ENCODE measurements at regions of chr17 and their contacts with region 1.

Region 1: GRCh38 chr17:17783116-17783824 is 53.5 kb downstream of the SREBF1 start:
- DNase-seq: peak in 1 of 2 donors; percentile 79
- H3K4me3 ChIP-seq: peak overlapping the region; percentile 50 to 58
- H3K27ac ChIP-seq: peak overlapping the region; percentile 70 to 82
- H3K4me1 ChIP-seq: peaks cover 13 to 62% (median 47%) of the 10 kb centered on the region in 4 donors
- H3K27me3 ChIP-seq: no peaks in the 10 kb centered on the region
- CTCF ChIP-seq: no peak

Region 2: DNA sequence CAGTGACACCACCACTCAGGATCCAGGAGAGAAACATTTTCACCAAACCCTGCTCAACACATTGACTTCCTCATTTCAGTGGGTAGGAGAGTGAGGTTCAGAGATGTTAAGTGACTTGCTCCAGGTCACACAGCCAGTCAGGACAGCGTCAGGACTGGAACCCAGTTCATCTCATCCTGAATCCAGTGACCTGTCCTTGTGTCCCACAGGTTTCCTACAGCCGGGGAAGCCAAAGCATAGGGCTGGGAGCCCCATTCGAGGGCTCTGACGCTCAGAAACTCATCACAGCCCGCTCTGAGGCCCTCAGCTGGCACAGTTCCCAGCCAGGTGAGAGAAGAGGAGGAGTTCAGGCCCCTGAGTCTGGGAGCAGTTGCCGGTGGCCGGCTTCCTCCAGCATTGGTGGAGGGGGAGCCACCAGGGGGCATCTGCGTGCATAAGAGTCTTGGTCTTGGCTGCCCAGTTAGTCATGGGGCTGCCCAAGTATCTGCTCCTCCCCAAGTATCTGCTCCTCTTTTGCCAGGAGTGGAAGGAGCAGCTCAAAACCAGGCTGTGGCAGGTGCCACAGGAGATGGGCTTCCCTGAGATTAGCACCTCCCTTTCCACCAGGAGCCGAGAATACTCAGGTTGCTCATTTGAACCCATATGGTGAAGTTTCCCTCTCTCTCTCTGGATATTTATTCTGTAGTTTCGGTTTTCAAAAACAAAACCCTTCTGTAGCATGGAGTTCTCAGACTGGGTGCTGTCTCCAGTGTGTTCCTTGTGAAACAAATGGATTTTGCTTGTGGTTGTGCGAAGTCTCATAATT is 867.3 kb before region 1 on chr17:
- intact Hi-C with region 1: no loop called
- DNase-seq: peak; percentile 57 to 67
- H3K4me3 ChIP-seq: no peak overlapping the region
- H3K27ac ChIP-seq: no peak overlapping the region
- H3K4me1 ChIP-seq: no peaks in the 10 kb centered on the region
- H3K27me3 ChIP-seq: peaks cover 0 to 16% of the 10 kb centered on the region in 2 donors
- CTCF ChIP-seq: no peak

Region 3: DNA sequence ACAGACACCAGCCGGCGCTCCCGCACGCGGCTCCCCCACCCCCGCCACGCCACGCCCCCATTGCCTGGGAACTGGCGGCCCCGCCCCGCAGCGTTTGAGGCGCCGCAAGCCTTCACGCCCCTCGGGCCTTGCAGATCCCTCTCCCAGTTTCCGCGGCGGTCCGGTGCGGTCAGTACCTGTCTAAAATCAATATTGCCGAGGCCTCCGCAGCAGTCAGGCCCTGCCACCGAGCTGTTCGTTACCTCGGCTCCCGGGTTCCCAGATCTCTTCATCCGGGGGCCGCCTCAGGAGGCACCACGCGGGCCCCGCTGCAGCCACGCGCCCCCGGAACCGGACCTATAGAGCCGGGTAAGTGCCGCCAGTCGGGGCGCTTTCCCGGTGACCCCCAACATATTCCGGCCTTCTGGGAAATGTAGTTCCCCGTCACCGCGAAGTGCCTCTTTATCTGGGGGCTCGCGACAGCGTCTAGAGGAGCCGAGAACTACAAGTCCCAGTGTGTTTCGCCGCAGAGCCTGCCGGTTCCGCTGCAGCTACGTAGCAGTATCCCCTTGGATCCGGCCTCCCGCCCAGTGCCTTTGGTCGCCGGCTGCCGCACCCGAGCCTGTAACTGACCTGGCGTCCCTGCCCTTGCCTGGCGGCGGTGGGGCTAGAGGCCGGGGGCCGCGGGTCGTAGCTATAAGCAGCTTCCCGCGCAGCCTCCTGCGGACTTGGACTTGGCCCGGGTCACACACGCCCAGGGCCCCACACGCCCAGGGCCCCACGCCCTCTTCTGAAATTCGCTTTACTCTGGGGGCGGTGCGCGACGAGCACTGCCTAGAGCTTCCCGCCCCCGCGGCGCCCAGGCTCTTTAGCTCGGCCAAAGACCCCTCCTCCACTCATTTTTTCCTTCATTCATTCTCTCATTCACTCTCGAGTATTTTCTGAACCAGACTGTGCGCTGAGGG is 191.6 kb before region 1 on chr17 and contains the start of gene PEMT:
- intact Hi-C with region 1: no loop called
- DNase-seq: peak; percentile 98
- H3K4me3 ChIP-seq: peak within 1 kb of the TSS; percentile 62 to 69
- H3K27ac ChIP-seq: peak within 1 kb of the TSS; percentile 75 to 81
- H3K4me1 ChIP-seq: peaks cover 0 to 27% (median 20%) of the 10 kb centered on the region in 4 donors
- H3K27me3 ChIP-seq: no peaks in the 10 kb centered on the region
- CTCF ChIP-seq: no peak

Region 4: GRCh38 chr17:17752089-17752820 is 31.0 kb before region 1 on chr17:
- intact Hi-C with region 1: loop called (anchors 2 kb)
- DNase-seq: peak; percentile 96 to 98
- H3K4me3 ChIP-seq: peak overlapping the region; percentile 51 to 52
- H3K27ac ChIP-seq: peak overlapping the region; percentile 69 to 77
- H3K4me1 ChIP-seq: peaks cover 0 to 39% (median 36%) of the 10 kb centered on the region in 4 donors
- H3K27me3 ChIP-seq: no peaks in the 10 kb centered on the region
- CTCF ChIP-seq: peak; percentile 34 to 35

Region 5: DNA sequence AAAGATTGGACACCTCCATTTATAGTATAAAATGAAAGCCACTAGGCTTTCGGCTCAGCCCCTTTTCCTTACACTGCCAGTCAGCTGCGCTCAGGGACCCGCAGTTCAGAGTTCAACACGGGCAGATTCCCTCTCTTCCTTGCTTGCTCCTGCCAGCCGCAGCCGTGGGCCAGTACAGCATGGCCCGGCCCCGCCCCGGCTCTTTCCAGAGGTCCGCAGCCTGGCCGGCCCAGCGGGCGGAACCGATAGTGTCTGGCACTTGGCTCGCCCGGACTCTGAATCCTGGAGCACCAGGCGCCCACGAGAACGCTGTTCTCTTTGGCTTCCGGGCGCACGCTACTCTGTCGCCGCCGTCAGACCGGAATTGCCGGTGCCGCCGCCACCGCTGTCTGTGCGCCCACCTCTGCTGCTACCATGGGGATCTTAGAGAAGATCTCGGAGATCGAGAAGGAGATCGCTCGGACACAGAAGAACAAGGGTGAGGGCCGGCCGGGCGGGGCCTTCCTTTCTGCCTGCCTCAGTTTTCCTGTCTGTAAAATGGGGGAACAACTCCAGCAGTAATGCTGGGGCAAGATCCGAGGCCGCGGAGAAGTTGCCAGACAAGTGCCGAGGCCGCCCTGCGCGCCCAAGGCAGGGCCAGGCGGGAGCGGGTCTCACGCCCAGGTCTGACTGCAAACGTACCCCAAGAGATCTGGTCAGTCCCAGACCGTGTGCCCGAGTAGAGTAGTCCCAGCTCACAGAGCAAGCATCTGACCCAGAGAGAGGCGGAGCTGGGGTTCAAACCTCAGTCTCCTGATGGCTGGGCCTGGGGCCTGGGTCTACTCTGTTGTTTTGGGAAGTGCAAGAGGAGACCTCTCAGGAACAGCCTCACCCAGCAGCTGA is 304.6 kb after region 1 on chr17 and contains the start of gene DRG2:
- intact Hi-C with region 1: loop called (anchors 5 kb)
- DNase-seq: peak; percentile 94
- H3K4me3 ChIP-seq: peak within 1 kb of the TSS; percentile 69 to 83
- H3K27ac ChIP-seq: peak within 1 kb of the TSS; percentile 81 to 83
- H3K4me1 ChIP-seq: peaks cover 0 to 20% (median 18%) of the 10 kb centered on the region in 4 donors
- H3K27me3 ChIP-seq: no peaks in the 10 kb centered on the region
- CTCF ChIP-seq: no peak